CD8-positive, alpha-beta T cell (primary cell): ENCODE measurements at regions of chr10 and their contacts with region 1.

Region 1: GRCh38 chr10:102476466-102477141 is 25.3 kb upstream of the C10orf95 start:
- DNase-seq: peak in 5 of 9 experiments; percentile 13 to 60 (median 24)
- ATAC-seq: no peak
- H3K4me3 ChIP-seq: no peak overlapping the region
- H3K4me3 Mint-ChIP-seq: peak overlapping the region; percentile 29
- H3K27ac ChIP-seq: peak overlapping the region in 1 of 2 experiments; percentile 43
- H3K27ac Mint-ChIP-seq: peak overlapping the region; percentile 79
- H3K4me1 ChIP-seq: peaks cover 36% of the 10 kb centered on the region
- H3K4me1 Mint-ChIP-seq: peaks cover 43% of the 10 kb centered on the region
- H3K27me3 ChIP-seq: no peaks in the 10 kb centered on the region
- H3K27me3 Mint-ChIP-seq: no peaks in the 10 kb centered on the region
- CTCF ChIP-seq: no peak

Region 2: GRCh38 chr10:102001435-102002068 is 475.1 kb before region 1 on chr10:
- CTCF ChIA-PET with region 1: no interaction called
- POLR2A ChIA-PET with region 1: no interaction called
- intact Hi-C with region 1: no loop called
- DNase-seq: peak in 1 of 9 experiments; percentile 34
- ATAC-seq: no peak
- H3K4me3 ChIP-seq: no peak overlapping the region
- H3K4me3 Mint-ChIP-seq: no peak overlapping the region
- H3K27ac ChIP-seq: no peak overlapping the region
- H3K27ac Mint-ChIP-seq: no peak overlapping the region
- H3K4me1 ChIP-seq: peaks cover 8% of the 10 kb centered on the region
- H3K4me1 Mint-ChIP-seq: peaks cover 11% of the 10 kb centered on the region
- H3K27me3 ChIP-seq: no peaks in the 10 kb centered on the region
- H3K27me3 Mint-ChIP-seq: no peaks in the 10 kb centered on the region
- CTCF ChIP-seq: no peak

Region 3: GRCh38 chr10:102327002-102327401 is 149.6 kb before region 1 on chr10:
- CTCF ChIA-PET with region 1: no interaction called
- POLR2A ChIA-PET with region 1: no interaction called
- intact Hi-C with region 1: no loop called
- DNase-seq: no peak
- ATAC-seq: no peak
- H3K4me3 ChIP-seq: no peak overlapping the region
- H3K4me3 Mint-ChIP-seq: no peak overlapping the region
- H3K27ac ChIP-seq: no peak overlapping the region
- H3K27ac Mint-ChIP-seq: no peak overlapping the region
- H3K4me1 ChIP-seq: peaks cover 11% of the 10 kb centered on the region
- H3K4me1 Mint-ChIP-seq: peaks cover 23% of the 10 kb centered on the region
- H3K27me3 ChIP-seq: no peaks in the 10 kb centered on the region
- H3K27me3 Mint-ChIP-seq: no peaks in the 10 kb centered on the region
- CTCF ChIP-seq: no peak

Region 4: GRCh38 chr10:102399217-102400089 is 77.2 kb before region 1 on chr10:
- CTCF ChIA-PET with region 1: interaction called, 100 read pairs
- POLR2A ChIA-PET with region 1: interaction called, 7 read pairs
- intact Hi-C with region 1: loop called (anchors 1 kb)
- DNase-seq: peak; percentile 78 to 95 (median 87)
- ATAC-seq: peak; percentile 51
- H3K4me3 ChIP-seq: peak overlapping the region; percentile 44 to 65
- H3K4me3 Mint-ChIP-seq: peak overlapping the region; percentile 76
- H3K27ac ChIP-seq: peak overlapping the region; percentile 59 to 86
- H3K27ac Mint-ChIP-seq: peak overlapping the region; percentile 81
- H3K4me1 ChIP-seq: peaks cover 30% of the 10 kb centered on the region
- H3K4me1 Mint-ChIP-seq: peaks cover 38% of the 10 kb centered on the region
- H3K27me3 ChIP-seq: no peaks in the 10 kb centered on the region
- H3K27me3 Mint-ChIP-seq: no peaks in the 10 kb centered on the region
- CTCF ChIP-seq: peak; percentile 89

Region 5: GRCh38 chr10:102420810-102421644 is 55.6 kb before region 1 on chr10 and contains the start of gene FBXL15:
- CTCF ChIA-PET with region 1: interaction called, 19 read pairs
- POLR2A ChIA-PET with region 1: interaction called, 5 read pairs
- intact Hi-C with region 1: loop called in 1 of 2 experiments (anchors 1 kb)
- DNase-seq: peak; percentile 86 to 98 (median 95)
- ATAC-seq: peak; percentile 70
- H3K4me3 ChIP-seq: peak within 1 kb of the TSS; percentile 75 to 81
- H3K4me3 Mint-ChIP-seq: peak within 1 kb of the TSS; percentile 95
- H3K27ac ChIP-seq: peak within 1 kb of the TSS; percentile 79 to 82
- H3K27ac Mint-ChIP-seq: peak within 1 kb of the TSS; percentile 91
- H3K4me1 ChIP-seq: peaks cover 36% of the 10 kb centered on the region
- H3K4me1 Mint-ChIP-seq: peaks cover 39% of the 10 kb centered on the region
- H3K27me3 ChIP-seq: peaks cover 6 to 17% of the 10 kb centered on the region in 2 experiments
- H3K27me3 Mint-ChIP-seq: peaks cover 15% of the 10 kb centered on the region
- CTCF ChIP-seq: no peak
- total RNA-seq, gene FBXL15: 7.0 to 7.9 TPM

Region 6: GRCh38 chr10:102450194-102450938 is 26.2 kb before region 1 on chr10:
- CTCF ChIA-PET with region 1: interaction called, 19 read pairs
- POLR2A ChIA-PET with region 1: interaction called, 8 read pairs
- intact Hi-C with region 1: no loop called
- DNase-seq: peak; percentile 78 to 98 (median 89)
- ATAC-seq: peak; percentile 77
- H3K4me3 ChIP-seq: peak overlapping the region; percentile 73 to 92
- H3K4me3 Mint-ChIP-seq: peak overlapping the region; percentile 92
- H3K27ac ChIP-seq: peak overlapping the region; percentile 76 to 88
- H3K27ac Mint-ChIP-seq: peak overlapping the region; percentile 94
- H3K4me1 ChIP-seq: peaks cover 16% of the 10 kb centered on the region
- H3K4me1 Mint-ChIP-seq: peaks cover 23% of the 10 kb centered on the region
- H3K27me3 ChIP-seq: no peaks in the 10 kb centered on the region
- H3K27me3 Mint-ChIP-seq: no peaks in the 10 kb centered on the region
- CTCF ChIP-seq: no peak

Region 7: DNA sequence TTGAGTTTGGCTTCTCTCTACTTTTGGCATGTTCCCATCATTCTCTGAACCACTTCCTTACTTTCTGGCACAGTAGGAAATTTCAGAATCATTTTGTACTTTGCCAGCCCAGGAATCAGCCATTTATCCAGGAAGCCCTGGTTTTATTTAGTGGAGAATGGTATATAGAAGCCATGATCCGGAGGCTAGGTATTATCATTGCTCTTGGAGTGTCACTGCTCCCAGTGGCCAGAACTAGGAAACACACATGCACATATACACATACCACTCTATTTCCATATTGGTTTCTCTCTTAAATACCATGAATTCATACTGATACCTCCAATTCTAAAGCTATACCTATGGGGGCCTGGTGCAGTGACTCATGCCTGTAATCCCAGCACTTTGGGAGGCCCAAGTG is 63.4 kb after region 1 on chr10:
- CTCF ChIA-PET with region 1: no interaction called
- POLR2A ChIA-PET with region 1: no interaction called
- intact Hi-C with region 1: no loop called
- DNase-seq: no peak
- ATAC-seq: no peak
- H3K4me3 ChIP-seq: no peak overlapping the region
- H3K4me3 Mint-ChIP-seq: no peak overlapping the region
- H3K27ac ChIP-seq: no peak overlapping the region
- H3K27ac Mint-ChIP-seq: no peak overlapping the region
- H3K4me1 ChIP-seq: no peaks in the 10 kb centered on the region
- H3K4me1 Mint-ChIP-seq: peaks cover 9% of the 10 kb centered on the region
- H3K27me3 ChIP-seq: no peaks in the 10 kb centered on the region
- H3K27me3 Mint-ChIP-seq: no peaks in the 10 kb centered on the region
- CTCF ChIP-seq: no peak

Region 8: GRCh38 chr10:102583435-102584417 is 107.1 kb after region 1 on chr10:
- CTCF ChIA-PET with region 1: interaction called, 7 read pairs
- POLR2A ChIA-PET with region 1: no interaction called
- intact Hi-C with region 1: loop called in 1 of 2 experiments (anchors 1 kb)
- DNase-seq: peak; percentile 67 to 87 (median 82)
- ATAC-seq: peak; percentile 98
- H3K4me3 ChIP-seq: no peak overlapping the region
- H3K4me3 Mint-ChIP-seq: no peak overlapping the region
- H3K27ac ChIP-seq: no peak overlapping the region
- H3K27ac Mint-ChIP-seq: no peak overlapping the region
- H3K4me1 ChIP-seq: no peaks in the 10 kb centered on the region
- H3K4me1 Mint-ChIP-seq: peaks cover 4% of the 10 kb centered on the region
- H3K27me3 ChIP-seq: no peaks in the 10 kb centered on the region
- H3K27me3 Mint-ChIP-seq: no peaks in the 10 kb centered on the region
- CTCF ChIP-seq: peak; percentile 78